Left cardiac atrium (tissue), 4 donors: ENCODE measurements at regions of chr15 and their contacts with region 1.

Region 1: GRCh38 chr15:66472176-66472999 is 25.2 kb downstream of the SNAPC5 start:
- DNase-seq: no peak
- ATAC-seq: peak; percentile 61 to 65

Region 2: DNA sequence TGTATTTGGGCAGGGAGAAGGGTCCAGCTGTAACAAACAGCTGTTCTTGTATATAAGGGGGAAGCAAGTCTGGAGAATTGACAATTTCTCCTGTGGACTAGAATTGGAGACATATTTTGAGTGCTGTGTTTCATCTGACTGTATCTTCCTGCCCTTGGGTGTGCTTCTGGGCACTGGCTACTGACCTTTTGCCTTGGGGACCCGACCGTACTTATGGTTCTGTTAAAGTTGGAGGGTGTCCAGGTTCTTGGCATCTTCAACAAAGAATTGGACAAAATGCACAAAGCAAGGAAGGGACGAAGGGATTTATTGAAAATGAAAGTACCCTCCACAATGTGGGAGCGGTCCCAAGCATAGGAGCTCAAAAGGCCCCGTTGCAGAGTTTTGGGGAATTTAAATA is 54.7 kb before region 1 on chr15:
- intact Hi-C with region 1: loop called in 1 of 2 experiments (anchors 5 kb)
- DNase-seq: no peak
- ATAC-seq: peak in 1 of 2 donors; percentile 8